ENCODE measurements at regions of chr6 and their contacts with region 1.

Region 1: GRCh38 chr6:37791156-37791919 is 28.2 kb upstream of the ZFAND3 start:
- DNase-seq: peak; percentile 94
- ATAC-seq: peak; percentile 99

Region 2: GRCh38 chr6:37725957-37726356 is 65.4 kb before region 1 on chr6:
- intact Hi-C with region 1: no loop called
- DNase-seq: no peak
- ATAC-seq: peak; percentile 38

Region 3: DNA sequence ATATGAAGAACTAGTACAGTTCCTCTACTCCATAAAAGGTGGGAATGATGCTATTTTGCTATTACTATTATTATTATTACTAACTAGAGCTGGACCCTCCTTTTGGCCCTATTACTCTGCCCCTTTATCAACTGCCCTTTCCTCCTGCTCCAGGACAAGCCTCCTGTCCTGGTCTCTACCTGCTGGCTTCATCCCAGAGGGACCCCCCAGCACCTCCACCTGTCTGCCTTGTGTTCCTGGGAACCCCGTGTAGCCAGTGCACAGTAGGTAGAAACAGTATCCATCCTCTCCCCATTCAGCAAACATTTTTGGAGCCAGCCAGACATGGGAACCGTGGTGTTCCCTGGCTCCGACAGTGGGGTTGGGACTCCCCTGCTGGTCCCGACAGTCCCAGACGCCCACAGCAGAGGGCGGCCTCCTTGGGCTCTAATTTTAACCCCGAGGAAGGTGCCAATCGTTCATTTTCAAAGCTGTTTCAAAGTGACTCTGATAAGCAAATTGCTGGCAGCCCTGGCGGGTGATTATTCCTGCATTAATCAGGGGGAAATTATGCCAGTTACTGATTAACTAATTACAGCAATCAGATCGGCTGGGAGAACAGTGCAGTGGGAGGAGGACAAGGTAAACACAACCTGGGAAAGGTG is 49.5 kb before region 1 on chr6:
- intact Hi-C with region 1: no loop called
- DNase-seq: peak; percentile 43
- ATAC-seq: peak; percentile 80

Region 4: GRCh38 chr6:37845026-37845911 is 53.9 kb after region 1 on chr6:
- intact Hi-C with region 1: no loop called
- DNase-seq: no peak
- ATAC-seq: peak; percentile 79

Region 5: GRCh38 chr6:38001386-38001785 is 210.0 kb after region 1 on chr6:
- intact Hi-C with region 1: loop called (anchors 10 kb)
- DNase-seq: no peak
- ATAC-seq: no peak

Region 6: DNA sequence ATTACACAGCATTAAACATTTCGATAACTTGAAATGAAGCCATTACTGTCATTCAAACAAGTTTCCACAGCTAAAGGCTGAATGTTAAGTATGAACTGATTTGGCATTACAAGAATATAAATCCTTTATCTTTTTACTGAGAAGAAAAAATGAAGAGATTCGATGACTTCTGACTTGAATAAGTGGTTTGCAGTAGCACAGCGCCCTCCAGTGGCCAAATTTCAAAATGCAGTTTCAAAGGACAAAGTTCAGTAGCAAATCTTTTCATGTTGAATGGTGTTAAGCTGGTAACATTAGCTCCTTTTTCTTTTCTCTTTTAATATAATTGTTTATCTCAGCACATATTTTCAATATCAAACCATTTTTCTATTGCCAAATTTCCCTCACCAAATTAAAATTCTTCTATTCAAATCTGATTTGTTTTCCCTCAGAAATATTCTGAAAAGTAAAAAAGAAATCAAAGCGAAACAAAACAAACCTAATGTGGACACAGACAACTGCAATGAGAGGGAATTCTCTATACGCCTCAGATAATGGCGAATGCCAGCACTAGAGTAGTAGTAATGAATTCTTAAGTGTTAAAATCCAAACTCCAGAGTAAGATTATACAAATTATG is 702.7 kb after region 1 on chr6:
- intact Hi-C with region 1: loop called (anchors 10 kb)
- DNase-seq: peak; percentile 48
- ATAC-seq: peak; percentile 57